GM10248 (cell line): ENCODE measurements at regions of chr12 and their contacts with region 1.

Region 1: DNA sequence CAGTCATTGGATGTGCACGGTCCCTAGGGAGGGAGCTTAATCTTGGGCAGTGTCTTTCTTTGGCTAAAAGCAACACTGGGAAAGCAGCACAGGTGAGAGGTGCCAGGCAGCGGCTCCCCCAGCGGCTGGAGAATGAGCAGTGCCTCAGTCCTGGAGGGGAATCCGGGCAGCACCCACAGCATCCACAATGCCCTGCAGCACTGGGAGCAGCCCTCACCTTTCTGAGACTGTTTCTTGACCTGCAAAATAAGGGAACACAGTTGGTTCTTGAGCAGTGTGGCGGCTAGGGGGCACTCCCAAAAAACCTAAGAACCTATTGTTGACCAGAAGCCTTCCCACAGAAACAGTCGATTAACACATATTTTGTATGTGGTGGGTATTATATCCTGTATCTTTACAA is 75.8 kb downstream of the SINHCAF start:
- DNase-seq: no peak
- CTCF ChIP-seq: no peak

Region 2: GRCh38 chr12:31226639-31227038 is 23.5 kb before region 1 on chr12:
- CTCF ChIA-PET with region 1: no interaction called
- POLR2A ChIA-PET with region 1: no interaction called
- DNase-seq: peak; percentile 4
- CTCF ChIP-seq: no peak

Region 3: GRCh38 chr12:31362759-31363415 is 112.7 kb after region 1 on chr12:
- CTCF ChIA-PET with region 1: interaction called, 28 read pairs
- POLR2A ChIA-PET with region 1: no interaction called
- DNase-seq: peak; percentile 63
- CTCF ChIP-seq: peak; percentile 43